AG04449 (cell line): ENCODE measurements at regions of chr7 and their contacts with region 1.

Region 1: DNA sequence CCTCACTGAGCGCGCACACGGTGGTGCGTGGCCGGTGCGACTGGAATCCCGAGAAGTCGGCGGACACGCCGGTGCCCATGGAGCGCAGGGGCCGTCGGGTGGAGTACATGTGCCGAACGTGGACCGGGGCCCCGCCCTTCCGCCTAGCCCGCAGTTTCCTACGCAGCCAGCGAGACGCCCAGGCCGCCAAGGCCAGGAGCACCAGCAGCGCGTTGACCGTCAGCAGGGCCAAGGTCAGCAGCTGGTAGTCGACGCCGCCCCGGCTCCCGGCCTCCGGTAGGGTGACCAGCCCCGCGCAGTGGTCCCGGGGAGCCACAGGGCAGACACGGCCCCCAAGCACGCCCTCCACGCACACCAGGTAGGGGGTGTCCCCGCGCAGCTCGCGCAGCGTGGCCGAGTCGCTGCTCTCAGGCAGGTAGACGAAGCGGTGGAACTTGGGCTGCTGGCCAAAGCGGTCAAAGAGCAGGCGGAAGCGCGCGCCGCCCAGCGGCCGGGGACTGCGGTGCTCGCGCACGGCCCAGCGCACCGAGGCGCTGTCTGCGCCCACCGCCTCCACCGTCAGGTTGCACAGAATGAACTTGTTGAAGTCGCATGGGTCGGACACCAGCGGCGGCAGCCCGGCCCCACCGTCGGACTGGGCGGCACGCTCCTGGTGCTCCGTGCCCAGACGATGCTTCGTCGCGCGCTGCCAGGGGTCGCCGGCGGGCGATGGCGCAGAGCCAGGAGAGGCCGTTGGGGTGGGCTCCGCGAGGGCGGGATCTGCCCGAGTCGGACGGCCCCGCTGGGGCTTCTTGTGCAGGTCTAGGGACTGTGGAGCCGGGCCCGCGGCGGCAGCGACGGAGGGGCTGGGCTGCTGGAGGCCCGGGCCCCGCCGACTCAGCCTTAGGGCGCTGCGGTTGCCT is 2.2 kb downstream of the TRIL start:
- DNase-seq: no peak
- H3K4me3 ChIP-seq: peak overlapping the region; percentile 56
- CTCF ChIP-seq: peak; percentile 67

Region 2: GRCh38 chr7:28921822-28922221 is 34.1 kb before region 1 on chr7:
- CTCF ChIA-PET with region 1: interaction called, 767 read pairs
- POLR2A ChIA-PET with region 1: no interaction called
- DNase-seq: no peak
- H3K4me3 ChIP-seq: no peak overlapping the region
- CTCF ChIP-seq: peak; percentile 78

Region 3: GRCh38 chr7:28976022-28976421 is 20.1 kb after region 1 on chr7:
- CTCF ChIA-PET with region 1: interaction called, 50 read pairs
- POLR2A ChIA-PET with region 1: no interaction called
- DNase-seq: no peak
- H3K4me3 ChIP-seq: no peak overlapping the region
- CTCF ChIP-seq: no peak

Region 4: DNA sequence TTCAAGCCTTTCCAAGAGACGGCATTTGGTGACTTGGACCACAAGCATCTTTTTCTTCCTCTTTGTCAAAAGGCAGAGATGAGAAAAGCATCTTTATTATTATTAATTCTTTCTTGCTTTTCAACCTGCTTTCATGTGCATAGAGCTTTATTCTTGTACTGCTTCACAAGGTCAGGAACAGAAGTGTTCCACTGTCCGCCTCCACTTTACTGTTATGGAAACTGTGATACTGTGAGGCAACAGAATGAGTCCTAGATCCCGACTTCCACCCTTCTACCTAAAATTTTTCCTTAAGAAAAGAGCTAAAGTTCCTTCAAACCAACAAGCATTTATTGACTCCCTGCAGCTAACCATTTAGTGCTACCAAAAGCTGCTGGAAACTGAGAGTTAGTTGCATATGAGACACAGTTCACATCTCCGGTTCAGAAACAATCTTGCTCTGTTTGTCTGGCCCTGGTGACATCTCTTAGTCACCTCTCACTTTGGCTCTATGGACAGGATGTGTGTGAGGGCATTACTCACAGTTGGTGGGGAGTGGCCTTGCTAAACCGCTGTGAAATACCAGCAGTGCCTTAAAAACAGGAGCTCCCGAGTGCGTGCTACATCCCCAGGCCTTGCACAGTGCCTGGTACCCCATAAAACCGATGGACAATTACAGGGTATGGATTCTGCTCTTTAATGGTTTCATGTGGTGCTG is 79.2 kb after region 1 on chr7:
- CTCF ChIA-PET with region 1: interaction called, 26 read pairs
- POLR2A ChIA-PET with region 1: no interaction called
- DNase-seq: no peak
- H3K4me3 ChIP-seq: no peak overlapping the region
- CTCF ChIP-seq: no peak

Region 5: GRCh38 chr7:29091715-29092114 is 135.7 kb after region 1 on chr7:
- CTCF ChIA-PET with region 1: interaction called, 10 read pairs
- POLR2A ChIA-PET with region 1: no interaction called
- DNase-seq: no peak
- H3K4me3 ChIP-seq: no peak overlapping the region; the same call in 1 of the 2 replicates
- CTCF ChIP-seq: no peak

Region 6: DNA sequence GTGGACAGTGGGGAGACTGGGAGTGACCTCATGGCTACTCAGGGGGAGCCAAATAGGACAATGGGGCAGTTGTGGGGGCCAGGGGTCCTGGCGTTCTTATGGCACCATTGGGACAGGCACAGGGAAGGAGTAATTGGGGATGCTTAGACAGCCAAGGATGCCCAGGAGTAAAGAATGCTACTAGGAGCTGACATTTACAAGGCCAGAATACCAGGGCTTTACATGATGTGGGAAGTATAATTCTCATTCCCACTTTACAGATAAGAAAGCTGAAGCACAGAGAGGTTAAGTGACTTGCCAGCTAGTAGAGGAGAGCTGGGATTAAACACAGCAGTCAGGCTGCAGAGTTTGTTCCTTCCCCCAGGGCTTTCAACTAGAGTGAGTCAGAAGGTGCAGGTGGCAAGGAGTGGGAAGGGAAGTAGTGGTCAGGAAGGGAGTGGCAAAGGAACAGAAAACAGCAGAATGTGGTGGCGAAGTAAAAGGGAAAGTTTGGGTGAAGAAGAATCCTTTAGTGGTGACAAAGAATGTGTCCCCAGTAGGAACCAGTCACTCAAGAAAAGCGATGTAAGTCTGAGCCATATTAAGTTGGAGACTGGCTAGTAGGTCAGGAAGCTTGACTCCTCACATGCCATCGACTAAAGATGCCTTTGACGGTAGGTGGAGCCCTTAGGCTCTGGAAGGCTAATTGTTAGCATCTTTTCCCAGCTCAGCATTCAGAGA is 157.6 kb after region 1 on chr7:
- CTCF ChIA-PET with region 1: interaction called, 15 read pairs
- POLR2A ChIA-PET with region 1: no interaction called
- DNase-seq: no peak
- H3K4me3 ChIP-seq: no peak overlapping the region
- CTCF ChIP-seq: peak; percentile 17